H1 (cell line): ENCODE measurements at regions of chr12 and their contacts with region 1.

Region 1: DNA sequence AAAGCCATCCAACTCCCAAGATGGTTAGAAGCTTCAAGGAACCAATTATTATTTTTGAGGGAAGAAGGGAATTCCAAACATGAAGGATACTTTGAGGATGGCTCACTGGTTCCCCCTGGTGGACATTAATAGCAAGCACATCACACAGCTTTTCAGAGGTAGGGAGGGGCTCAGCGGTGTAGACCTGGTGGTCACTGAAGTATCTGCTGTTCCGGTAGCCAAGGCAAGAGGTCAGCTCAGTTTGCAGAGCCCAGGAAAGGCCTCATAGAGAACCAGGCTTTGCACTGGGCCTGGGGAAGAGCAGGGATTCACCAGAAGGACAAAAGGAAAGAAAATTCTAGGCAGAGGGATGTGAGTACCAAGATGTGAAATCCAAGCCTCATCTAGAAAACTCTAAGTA is 118.7 kb downstream of the KSR2 start:
- DNase-seq: peak; percentile 29 to 57
- H3K4me3 ChIP-seq: no peak overlapping the region
- H3K27ac ChIP-seq: no peak overlapping the region
- H3K4me1 ChIP-seq: peaks cover 0 to 10% (median 3%) of the 10 kb centered on the region in 4 experiments; a peak in 4 of 7 replicates
- H3K27me3 ChIP-seq: no peaks in the 10 kb centered on the region
- CTCF ChIP-seq: peak; percentile 63 to 98 (median 94)
- EP300 ChIP-seq: no peak
- POLR2A ChIP-seq: no peak
- RAD21 ChIP-seq: peak; percentile 77 to 81

Region 2: DNA sequence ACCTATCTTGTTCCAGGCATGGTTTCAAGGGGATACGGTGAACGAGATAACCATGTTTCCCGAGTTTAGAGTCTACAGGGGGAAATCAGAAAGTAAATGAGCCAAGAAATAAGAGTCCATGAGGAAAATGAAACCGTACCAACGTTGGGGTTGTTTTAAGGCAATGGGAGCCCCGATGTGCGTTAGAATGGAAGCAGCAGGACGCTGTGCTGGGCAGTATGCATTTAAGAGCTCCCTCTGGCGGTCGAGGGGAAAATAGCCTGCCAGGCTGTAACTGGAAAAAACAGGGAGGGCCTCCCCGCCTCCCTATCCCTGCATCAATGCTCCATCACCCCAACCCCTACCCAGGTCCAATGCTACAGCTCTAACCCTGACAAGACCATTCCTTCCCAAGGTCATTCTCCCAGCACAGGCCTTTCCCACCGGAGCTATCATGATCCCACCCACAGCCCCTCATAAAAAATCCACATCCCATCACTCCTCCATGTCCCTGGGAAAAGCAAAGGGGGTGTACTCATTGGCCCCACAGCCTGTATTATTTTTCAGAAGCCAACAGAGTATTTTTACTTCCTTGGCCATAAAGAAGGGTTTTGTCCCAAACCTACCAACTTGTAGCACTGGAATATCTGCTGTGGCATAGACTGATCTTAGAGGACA is 262.3 kb before region 1 on chr12:
- CTCF ChIA-PET with region 1: interaction called, 39 read pairs
- POLR2A ChIA-PET with region 1: no interaction called
- DNase-seq: peak; percentile 36 to 89
- H3K4me3 ChIP-seq: no peak overlapping the region
- H3K27ac ChIP-seq: no peak overlapping the region
- H3K4me1 ChIP-seq: peaks cover 6 to 10% (median 7%) of the 10 kb centered on the region in 4 experiments
- H3K27me3 ChIP-seq: no peaks in the 10 kb centered on the region
- CTCF ChIP-seq: peak; percentile 84 to 96 (median 92)
- EP300 ChIP-seq: no peak
- POLR2A ChIP-seq: no peak
- RAD21 ChIP-seq: peak; percentile 81 to 83

Region 3: DNA sequence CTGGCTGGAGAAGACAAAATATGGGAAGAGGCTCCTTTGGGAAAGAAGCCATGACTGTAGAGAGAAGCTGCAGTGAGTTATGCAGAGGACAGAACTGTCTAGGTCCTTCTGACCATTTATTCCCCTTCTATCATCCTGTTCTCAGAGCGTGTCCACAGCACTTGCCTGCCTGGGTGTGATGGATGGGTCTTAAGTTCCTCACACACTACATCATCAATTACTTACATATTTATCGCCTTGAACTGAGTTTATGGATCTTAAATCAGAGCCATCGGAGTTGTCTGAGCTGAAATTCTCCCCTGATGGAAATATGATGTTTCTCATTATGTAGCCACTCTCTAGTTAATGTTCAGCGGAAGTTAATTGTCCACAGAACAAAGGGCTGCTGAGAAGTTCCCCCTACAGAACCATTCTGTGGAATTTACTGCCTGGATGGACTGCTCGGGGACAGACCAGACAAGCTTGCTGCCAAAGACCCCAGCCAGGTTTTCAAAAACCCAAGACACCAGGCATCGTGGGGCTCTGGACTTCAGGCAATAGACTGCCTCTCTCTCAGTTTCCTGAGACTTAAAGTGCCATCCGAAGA is 256.1 kb before region 1 on chr12:
- CTCF ChIA-PET with region 1: interaction called, 39 read pairs
- POLR2A ChIA-PET with region 1: no interaction called
- DNase-seq: no peak
- H3K4me3 ChIP-seq: no peak overlapping the region
- H3K27ac ChIP-seq: no peak overlapping the region
- H3K4me1 ChIP-seq: peaks cover 0 to 4% (median 2%) of the 10 kb centered on the region in 4 experiments; a peak in 4 of 7 replicates
- H3K27me3 ChIP-seq: no peaks in the 10 kb centered on the region
- CTCF ChIP-seq: no peak
- EP300 ChIP-seq: no peak
- POLR2A ChIP-seq: no peak
- RAD21 ChIP-seq: no peak